ENCODE measurements at regions of chr20 and their contacts with region 1.

Region 1: DNA sequence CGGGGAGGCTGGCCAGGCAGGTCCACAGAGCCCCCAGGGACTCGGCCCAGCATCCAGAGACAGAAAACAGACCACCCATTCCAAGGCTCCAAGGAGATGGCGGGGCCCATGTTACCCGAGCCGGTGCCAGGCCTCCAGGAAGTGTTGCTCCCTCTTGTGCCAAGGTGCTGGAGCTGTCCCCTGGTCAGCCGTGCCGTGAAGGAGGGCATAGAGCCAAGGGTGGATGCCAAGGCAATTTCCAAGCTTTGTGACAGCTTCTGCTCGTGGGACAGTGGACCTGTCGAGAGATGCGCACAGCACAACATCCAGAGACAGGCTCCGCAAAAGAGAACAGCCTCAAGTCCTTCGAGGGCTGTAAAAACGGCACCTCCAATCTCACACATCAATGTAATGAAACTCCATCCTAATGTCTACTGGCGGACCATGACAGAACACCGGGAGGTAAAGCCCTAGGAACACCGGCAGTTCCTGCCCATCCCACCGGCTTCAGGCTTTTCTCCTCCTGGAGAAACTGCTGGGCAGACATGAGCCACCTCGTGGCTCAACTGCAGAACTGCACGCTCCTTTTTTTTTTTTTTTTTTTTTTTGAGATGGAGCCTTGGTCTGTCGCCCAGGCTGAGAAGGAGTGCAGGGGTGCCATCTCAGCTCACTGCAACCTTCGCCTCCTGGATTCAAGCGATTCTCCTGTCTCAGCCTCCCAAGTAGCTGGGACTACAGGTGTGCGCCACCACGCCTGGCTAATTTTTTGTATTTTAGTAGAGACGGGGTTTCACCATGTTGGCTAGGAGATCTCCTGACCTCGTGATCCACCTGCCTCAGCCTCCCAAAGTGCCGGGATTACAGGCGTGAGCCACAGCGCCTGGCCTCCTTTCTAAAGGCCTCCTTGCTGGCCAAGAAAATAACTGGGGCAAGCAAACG is 30.9 kb upstream of the AVP start:
- DNase-seq: peak; percentile 41
- ATAC-seq: peak; percentile 39

Region 2: GRCh38 chr20:3051385-3052019 is 63.9 kb before region 1 on chr20:
- intact Hi-C with region 1: loop called (anchors 5 kb)
- DNase-seq: no peak
- ATAC-seq: no peak

Region 3: DNA sequence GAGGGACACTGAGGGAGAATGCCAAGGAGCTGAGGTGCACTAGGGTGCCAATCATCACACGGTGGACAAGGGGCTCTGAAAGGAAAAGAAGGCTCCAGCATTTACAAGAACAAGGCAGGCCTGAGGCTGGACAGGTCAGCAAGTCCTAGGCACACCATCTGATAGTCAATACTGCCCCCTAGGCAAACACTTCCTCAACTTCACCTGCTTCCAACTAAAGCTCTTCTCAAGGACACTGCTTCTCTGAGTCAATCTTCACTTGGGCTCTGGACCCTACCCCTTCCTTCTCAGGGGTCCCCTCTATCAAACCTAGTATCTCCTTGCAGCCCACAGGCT is 161.2 kb after region 1 on chr20:
- intact Hi-C with region 1: no loop called
- DNase-seq: no peak
- ATAC-seq: peak; percentile 41

Region 4: DNA sequence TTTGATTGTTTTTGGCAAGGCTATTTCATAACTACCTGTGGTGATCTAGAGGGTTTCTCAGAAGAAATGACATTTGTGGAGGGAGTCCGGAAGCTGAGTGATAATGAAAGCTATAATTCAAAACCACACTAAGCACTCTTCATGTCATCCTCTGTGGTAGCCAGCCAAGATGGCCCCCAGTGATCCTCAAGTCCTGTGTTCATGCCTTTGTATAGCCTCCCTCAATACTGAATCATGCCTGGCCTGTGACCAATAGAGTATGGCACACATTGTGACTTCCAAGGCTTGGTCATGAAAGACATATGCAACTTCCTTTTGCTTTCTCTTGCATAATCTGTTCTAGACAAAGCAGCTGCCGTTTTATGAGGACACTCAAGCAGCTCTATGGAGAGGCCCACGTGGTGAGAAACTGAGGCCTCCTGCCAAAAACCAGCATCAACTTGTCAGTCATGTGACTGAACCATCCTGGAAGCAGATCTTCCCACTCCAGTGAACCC is 304.8 kb after region 1 on chr20:
- intact Hi-C with region 1: no loop called
- DNase-seq: peak; percentile 35
- ATAC-seq: peak; percentile 79

Region 5: DNA sequence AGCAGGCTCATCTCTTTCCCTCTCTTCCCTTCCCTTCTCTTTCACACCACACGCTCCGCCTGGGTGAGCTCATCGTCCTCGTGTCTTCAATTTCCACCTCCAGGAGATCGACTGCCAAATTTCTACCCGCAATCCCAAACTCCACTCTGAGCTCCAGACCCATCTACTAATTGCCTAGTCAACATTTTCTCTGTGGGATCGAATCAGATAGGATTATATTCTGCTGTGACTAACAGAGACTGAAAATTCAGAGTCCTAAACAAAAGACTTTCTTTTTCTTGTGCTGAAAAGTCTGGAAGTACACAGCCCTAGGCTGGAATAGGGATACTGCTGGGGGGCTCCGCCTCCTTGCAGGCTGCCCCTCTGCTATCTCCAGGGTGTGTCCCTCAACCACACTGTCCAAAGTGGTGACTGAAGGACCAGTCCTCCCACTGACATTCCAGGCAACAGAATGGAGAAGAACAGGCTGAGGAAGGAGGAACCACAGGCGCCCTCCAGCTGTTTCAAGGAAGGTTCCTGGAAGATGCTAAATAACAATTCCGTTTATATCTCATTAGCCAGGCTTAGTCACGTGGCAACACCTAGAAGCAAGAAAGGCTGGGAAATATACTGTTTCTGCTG is 612.1 kb after region 1 on chr20:
- intact Hi-C with region 1: no loop called
- DNase-seq: no peak
- ATAC-seq: peak; percentile 60